Sigmoid colon (tissue), 7 donors: ENCODE measurements at regions of chr2 and their contacts with region 1.

Region 1: DNA sequence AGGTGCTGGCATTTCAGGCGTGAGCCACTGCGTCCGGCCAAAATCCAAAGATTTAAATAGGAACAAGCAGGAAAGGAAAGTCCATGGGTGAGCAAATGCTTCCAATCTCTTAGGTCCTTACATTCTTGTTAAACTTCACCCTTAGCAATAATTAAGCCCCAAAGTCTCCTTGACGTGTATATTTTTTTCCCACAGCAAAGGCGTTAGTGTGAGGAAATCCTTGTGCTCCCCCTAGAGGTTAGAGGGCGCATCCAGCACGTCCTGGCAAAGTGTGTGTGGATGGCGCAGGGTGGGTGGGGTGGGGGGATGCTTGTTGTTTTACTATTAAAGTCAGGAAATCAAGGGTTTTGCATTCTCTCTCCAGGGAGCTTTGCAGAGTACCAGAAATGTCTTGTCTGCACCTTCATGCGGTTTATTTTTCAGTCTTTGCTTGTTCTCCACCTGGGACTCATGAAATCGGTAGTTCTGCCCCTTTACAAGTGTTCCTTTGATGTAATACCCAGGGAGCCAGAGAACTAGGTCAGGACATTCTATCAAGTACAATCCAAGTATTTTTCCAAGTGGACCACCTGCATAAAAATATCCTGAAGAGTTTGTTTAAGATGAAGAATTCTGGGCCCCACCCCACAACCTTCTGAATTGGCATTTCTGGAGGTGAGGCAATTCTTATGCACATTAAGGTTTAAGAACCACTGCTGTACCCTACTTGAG is 22.2 kb upstream of the ITSN2 start:
- DNase-seq: peak; percentile 74
- H3K4me3 ChIP-seq: no peak overlapping the region
- H3K27ac ChIP-seq: no peak overlapping the region
- H3K4me1 ChIP-seq: peaks cover 0 to 4% (median 0%) of the 10 kb centered on the region in 4 donors
- H3K27me3 ChIP-seq: no peaks in the 10 kb centered on the region
- CTCF ChIP-seq: peak; percentile 25 to 88 (median 39)
- EP300 ChIP-seq: no peak
- POLR2A ChIP-seq: no peak

Region 2: DNA sequence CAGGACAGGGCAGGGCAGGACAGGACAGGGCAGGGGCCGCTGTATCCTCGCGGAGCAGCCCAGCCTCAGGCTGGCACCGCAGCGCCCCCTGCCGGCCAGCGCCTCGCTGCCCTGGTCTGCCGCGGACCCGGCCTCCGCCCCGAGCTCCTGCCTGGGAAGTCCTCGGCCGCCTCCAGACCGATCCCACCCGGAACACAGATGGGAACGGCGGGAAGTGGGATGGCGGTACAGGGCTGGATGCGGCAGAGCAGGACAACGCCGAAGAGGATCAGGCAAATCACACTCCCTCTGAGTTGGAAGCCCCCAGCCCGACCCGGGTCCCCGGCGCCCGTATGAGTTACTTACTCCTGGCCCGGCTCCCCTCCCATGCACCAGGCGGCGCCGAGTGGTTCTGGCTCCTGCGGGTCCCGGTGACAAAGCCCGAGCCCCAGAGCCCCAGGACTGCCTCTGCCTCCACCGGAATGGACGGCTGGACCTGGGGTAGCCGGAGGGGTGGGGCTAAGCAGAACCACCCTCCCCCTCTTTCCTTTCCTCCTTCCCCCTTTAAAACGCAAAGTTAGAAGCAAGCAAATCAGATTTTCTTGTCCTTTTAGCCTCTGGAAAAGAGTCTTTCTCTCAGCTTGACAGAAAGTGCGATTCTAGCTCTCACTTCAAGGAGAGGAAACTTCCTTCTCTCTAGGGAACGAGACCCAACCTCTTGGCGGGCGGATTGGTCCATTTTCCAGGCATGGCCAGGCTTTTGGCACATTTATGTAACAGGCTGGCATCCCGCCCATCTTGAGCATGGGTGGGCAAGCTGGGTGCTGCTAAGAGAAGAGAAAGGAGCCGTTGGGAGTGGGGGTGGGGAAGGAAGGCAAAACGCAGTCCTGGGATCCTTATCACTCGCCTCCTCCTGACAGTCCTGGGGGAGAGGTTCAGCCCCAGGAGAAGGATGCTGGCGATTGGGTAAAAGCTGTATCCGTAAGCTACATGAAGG is 297.8 kb before region 1 on chr2 and contains the start of gene TP53I3:
- intact Hi-C with region 1: loop called (anchors 5 kb)
- DNase-seq: peak; percentile 94
- H3K4me3 ChIP-seq: peak within 1 kb of the TSS; percentile 46 to 64 (median 55)
- H3K27ac ChIP-seq: peak within 1 kb of the TSS; percentile 82 to 95 (median 92)
- H3K4me1 ChIP-seq: peaks cover 0 to 18% (median 13%) of the 10 kb centered on the region in 4 donors
- H3K27me3 ChIP-seq: no peaks in the 10 kb centered on the region
- CTCF ChIP-seq: peak; percentile 96 to 98 (median 98)
- EP300 ChIP-seq: no peak
- POLR2A ChIP-seq: peak; percentile 62 to 73
- total RNA-seq, gene TP53I3: 3.6 to 27.7 (median 16.8) TPM

Region 3: DNA sequence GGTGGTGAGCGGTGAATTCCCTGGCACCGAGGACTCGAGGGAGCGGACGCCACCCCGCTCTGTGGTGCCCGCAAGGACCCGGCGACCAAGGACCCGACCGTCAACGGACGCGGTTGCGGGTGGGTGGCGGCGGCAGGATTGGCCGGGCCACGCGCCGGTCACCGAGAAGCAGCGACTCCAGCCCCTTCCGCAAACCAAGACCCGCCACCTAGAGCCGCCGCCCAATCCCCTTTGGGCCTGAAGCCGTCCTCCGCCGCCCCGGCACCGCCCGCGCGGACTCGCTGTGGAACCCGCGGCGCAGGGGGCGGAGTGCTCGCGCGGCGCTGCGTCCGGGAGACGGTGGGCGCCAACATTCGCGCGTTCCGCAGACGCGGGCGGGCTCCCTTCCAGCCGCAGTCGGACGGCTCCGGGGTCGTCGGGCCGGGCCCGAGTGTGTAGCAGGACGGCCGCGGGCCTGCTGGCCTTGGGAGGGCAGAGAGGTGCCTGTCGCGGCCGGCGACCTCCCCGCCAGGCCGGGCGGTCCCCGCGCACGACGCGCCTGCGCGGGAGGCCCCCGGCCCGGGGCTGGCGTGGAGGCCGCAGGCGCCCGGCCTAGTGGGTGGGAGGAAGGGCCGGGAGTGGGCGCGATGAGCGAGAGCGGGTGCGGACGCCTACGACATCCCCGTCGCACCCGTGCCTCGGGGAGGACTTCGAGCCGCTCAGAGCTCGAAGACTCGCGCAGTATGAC is 259.2 kb before region 1 on chr2 and contains the starts of genes FAM228B and PFN4:
- intact Hi-C with region 1: loop called (anchors 10 kb)
- DNase-seq: peak; percentile 95
- H3K4me3 ChIP-seq: peak within 1 kb of the TSS; percentile 46 to 68 (median 66)
- H3K27ac ChIP-seq: peak within 1 kb of the TSS; percentile 88 to 94 (median 92)
- H3K4me1 ChIP-seq: peaks cover 0 to 32% (median 15%) of the 10 kb centered on the region in 4 donors
- H3K27me3 ChIP-seq: no peaks in the 10 kb centered on the region
- CTCF ChIP-seq: no peak
- EP300 ChIP-seq: no peak
- POLR2A ChIP-seq: no peak
- total RNA-seq, gene FAM228B: 24.7 to 44.1 (median 37.2) TPM
- total RNA-seq, gene PFN4: 1.9 TPM in 1 of 4 donors, not detected in the others

Region 4: DNA sequence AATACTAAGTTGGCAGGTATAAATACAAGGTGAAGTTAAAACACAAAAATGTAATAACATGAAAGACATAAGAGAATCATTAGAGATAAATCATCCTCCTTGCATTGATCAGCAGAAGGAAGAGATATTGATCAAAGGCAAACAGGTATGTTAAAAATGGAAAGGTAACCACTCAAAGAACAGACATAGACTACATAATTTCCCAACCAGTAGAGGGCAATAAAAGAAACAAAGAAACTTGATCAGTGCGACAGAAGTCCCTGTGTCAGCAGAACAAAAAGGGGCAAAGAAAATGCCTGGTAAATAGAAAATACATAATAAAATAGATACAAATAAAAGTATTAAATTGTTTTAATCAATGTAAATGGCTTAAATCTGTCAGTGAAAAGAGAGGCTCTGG is 154.0 kb before region 1 on chr2:
- intact Hi-C with region 1: loop called (anchors 2 kb)
- DNase-seq: no peak
- H3K4me3 ChIP-seq: no peak overlapping the region
- H3K27ac ChIP-seq: no peak overlapping the region
- H3K4me1 ChIP-seq: no peaks in the 10 kb centered on the region
- H3K27me3 ChIP-seq: no peaks in the 10 kb centered on the region
- CTCF ChIP-seq: peak in 2 of 4 experiments; percentile 18 to 25
- EP300 ChIP-seq: no peak
- POLR2A ChIP-seq: no peak

Region 5: DNA sequence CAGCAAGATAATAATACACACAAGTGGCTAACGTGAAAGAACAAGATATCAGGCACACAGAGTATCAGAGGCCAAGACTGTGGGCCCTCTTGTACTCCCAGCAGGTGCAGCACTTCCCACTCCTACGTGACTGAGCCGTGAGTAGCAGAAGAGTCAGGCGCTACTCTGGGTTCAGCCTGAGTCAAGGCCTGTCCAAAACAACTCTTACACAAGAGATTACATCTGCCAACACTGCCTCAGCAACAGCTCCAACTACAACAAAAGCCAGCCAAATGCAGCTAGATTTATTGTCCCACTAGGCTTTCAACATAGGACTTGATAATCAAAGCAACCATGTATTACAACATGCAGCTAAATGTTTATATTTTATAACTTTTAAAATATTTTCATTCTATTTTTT is 78.4 kb before region 1 on chr2:
- intact Hi-C with region 1: loop called (anchors 5 kb)
- DNase-seq: peak; percentile 93
- H3K4me3 ChIP-seq: no peak overlapping the region
- H3K27ac ChIP-seq: peak overlapping the region; percentile 72 to 82 (median 78)
- H3K4me1 ChIP-seq: peaks cover 0 to 29% (median 27%) of the 10 kb centered on the region in 4 donors
- H3K27me3 ChIP-seq: no peaks in the 10 kb centered on the region
- CTCF ChIP-seq: no peak
- EP300 ChIP-seq: peak in 1 of 4 donors; percentile 32
- POLR2A ChIP-seq: no peak

Region 6: GRCh38 chr2:24317491-24317920 is 65.0 kb before region 1 on chr2:
- intact Hi-C with region 1: no loop called
- DNase-seq: no peak
- H3K4me3 ChIP-seq: no peak overlapping the region
- H3K27ac ChIP-seq: no peak overlapping the region
- H3K4me1 ChIP-seq: peaks cover 0 to 12% (median 3%) of the 10 kb centered on the region in 4 donors
- H3K27me3 ChIP-seq: no peaks in the 10 kb centered on the region
- CTCF ChIP-seq: no peak
- EP300 ChIP-seq: no peak
- POLR2A ChIP-seq: no peak

Region 7: DNA sequence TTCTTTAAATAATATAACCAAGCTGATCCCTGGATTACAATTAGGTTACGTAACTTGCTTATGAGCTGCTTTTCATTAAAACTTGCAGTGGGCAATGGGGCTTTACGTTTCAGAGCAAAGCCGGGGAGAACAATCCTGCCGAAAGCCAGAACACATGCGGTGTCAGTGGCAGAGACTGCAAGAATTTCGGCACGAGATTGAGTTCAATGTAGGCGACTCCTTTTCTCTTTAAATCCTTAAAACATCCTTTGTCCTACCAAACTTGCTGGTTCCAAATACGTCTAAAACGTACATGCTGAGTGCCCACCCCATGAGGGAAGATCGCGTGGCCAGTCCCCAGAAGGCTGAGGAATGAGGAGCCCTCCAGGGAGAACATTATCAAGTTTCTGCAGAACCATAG is 71.8 kb after region 1 on chr2:
- intact Hi-C with region 1: no loop called
- DNase-seq: no peak
- H3K4me3 ChIP-seq: peak overlapping the region in 3 of 4 donors; percentile 33 to 36 (median 35)
- H3K27ac ChIP-seq: peak overlapping the region; percentile 27 to 74 (median 60)
- H3K4me1 ChIP-seq: peaks cover 0 to 19% (median 5%) of the 10 kb centered on the region in 4 donors
- H3K27me3 ChIP-seq: no peaks in the 10 kb centered on the region
- CTCF ChIP-seq: no peak
- EP300 ChIP-seq: no peak
- POLR2A ChIP-seq: no peak